Activated T-helper 1 cell treated with anti-CD3 and anti-CD28 coated beads, Interleukin-12 subunit alpha, Interleukin-12 subunit beta, Interleukin-2, Interleukin-4 antibody, amounts not matched to agents 30 ng/mL and 10 ng/mL and 1 ng/mL, durations not matched to agents 14 hours and 24 hours and 36 hours (primary cell): ENCODE measurements at regions of chr1 and their contacts with region 1.

Region 1: DNA sequence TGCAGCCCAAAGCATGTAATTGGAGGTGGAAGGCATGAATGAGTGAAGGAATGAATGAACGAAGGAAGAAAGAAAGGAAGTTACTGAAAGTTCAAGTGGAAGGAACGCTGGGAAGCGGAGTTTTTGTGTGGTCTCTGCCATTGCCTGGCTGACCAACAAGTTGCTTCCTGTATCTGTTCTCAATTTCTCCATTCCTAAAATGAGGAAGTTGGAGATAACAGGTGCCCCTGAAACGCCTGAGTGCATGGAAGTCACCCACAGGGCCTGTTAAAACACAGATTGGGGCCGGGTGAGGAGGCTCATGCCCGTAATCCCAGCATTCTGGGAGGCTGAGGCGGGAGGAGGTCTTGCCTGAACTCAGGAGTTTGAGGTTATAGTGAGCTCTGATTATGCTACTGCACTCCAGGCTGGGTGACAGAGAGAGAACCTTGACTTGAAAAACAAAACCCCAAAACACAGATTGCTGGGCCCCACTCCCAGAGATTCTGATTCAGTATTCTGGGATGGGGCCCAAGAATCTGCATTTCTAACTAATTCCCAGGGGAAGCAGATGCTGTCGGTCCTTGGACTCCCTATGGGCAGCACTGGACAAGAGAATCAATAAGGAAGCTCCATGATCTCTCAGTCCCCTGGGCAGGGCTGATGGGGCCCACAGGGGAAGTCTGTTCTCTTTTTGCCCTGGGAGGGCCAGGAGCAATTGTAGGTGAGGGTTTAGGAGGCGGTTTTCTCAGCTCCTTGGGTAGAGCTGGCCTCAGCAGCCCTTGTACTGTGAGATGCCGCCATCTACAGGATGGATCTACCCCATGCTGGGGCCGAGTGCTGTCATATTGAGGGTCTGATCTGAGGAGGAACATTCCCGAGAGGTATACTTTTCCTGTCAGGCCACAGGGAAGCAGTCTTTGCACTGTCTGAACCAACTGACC is 3.3 kb upstream of the CNR2 start:
- DNase-seq: peak; percentile 36
- H3K4me3 Mint-ChIP-seq: no peak overlapping the region
- H3K27ac Mint-ChIP-seq: peak overlapping the region; percentile 80
- H3K4me1 Mint-ChIP-seq: peaks cover 11% of the 10 kb centered on the region
- H3K27me3 Mint-ChIP-seq: peaks cover 15% of the 10 kb centered on the region

Region 2: DNA sequence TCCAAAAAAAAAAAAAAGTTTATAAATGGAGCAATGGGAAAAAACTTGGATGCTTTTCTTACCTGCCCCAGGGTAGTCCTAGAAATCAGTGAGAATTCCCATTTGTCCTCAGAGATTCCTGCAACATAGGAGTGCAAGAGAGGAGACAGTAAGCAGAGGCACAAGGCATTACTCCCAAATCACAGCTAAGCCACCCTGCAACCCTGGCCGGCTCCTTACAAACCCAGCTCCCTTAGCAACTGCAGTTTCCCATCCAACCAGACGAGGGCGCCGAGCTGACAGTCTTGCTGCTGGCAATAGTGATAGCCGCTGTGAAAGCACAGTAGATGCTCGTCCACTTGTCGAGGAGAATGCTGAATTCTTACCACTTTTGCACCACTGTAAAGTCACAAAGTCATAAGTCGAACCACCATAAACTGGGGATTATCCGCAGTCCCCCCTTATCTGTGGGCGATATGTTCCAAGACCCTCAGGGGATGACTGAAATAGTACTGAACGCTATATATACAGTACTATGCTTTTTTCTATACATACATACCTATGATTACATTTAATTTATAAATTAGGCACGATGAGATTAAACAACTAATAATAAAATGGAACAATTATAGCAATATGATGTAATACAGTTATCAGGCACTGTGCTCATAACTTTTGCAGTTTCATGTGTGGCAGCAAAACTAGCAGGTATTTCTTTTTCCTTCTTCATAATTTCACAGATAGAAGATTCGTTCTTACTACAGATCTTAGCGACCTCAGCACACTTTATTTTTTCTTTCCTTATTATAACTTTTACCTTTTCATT is 144.2 kb before region 1 on chr1:
- intact Hi-C with region 1: loop called (anchors 1 kb)
- DNase-seq: peak; percentile 80
- H3K4me3 Mint-ChIP-seq: no peak overlapping the region
- H3K27ac Mint-ChIP-seq: no peak overlapping the region
- H3K4me1 Mint-ChIP-seq: peaks cover 27% of the 10 kb centered on the region
- H3K27me3 Mint-ChIP-seq: no peaks in the 10 kb centered on the region

Region 3: DNA sequence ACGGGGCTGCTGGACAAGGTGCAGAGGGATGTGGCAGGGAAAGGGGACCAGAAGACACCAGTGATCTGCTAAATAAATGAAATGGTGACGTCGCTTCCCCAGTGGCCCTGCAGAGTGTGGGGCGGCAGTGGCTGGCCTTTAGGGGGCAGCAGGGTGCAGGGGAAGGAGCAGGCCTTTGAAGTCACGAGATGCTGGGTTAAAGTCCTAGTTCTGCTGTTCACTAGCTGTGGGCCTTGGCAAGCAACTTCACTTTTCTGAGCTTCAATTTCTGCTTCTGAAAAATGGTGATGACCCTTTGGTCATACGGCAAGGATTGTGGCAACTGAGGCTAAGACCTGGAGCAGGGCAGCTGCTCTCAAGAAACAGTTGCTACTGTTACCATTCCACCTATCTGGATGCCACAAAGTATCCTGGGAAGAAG is 106.7 kb before region 1 on chr1:
- intact Hi-C with region 1: loop called (anchors 1 kb)
- DNase-seq: peak; percentile 70
- H3K4me3 Mint-ChIP-seq: no peak overlapping the region
- H3K27ac Mint-ChIP-seq: no peak overlapping the region
- H3K4me1 Mint-ChIP-seq: peaks cover 19% of the 10 kb centered on the region
- H3K27me3 Mint-ChIP-seq: no peaks in the 10 kb centered on the region

Region 4: DNA sequence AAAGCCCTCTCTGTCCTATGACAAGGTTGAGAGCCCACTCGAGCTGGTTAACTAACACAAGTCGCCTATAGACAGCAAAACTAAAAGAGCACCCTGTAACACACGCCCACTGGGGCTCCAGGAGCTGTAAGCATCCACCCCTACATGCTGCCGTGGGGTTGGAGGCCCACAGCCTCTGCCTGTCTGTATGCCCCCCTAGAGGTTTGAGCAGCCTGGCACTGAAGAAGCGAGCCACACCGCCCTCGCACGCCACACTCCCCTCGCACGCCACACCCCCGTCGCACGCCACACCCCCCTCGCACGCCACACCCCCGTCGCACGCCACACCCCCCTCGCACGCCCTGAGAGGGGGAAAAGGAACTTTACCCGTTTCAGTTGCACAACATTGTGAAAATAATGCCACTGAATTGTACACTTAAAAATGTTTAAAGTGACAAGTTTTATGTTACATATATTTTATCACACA is 78.0 kb before region 1 on chr1:
- intact Hi-C with region 1: loop called (anchors 1 kb)
- DNase-seq: peak; percentile 53
- H3K4me3 Mint-ChIP-seq: peak overlapping the region; percentile 75
- H3K27ac Mint-ChIP-seq: no peak overlapping the region
- H3K4me1 Mint-ChIP-seq: peaks cover 14% of the 10 kb centered on the region
- H3K27me3 Mint-ChIP-seq: peaks cover 10% of the 10 kb centered on the region

Region 5: GRCh38 chr1:23854568-23854967 is 61.9 kb before region 1 on chr1:
- intact Hi-C with region 1: no loop called
- DNase-seq: no peak
- H3K4me3 Mint-ChIP-seq: no peak overlapping the region
- H3K27ac Mint-ChIP-seq: no peak overlapping the region
- H3K4me1 Mint-ChIP-seq: no peaks in the 10 kb centered on the region
- H3K27me3 Mint-ChIP-seq: peaks cover 2% of the 10 kb centered on the region

Region 6: DNA sequence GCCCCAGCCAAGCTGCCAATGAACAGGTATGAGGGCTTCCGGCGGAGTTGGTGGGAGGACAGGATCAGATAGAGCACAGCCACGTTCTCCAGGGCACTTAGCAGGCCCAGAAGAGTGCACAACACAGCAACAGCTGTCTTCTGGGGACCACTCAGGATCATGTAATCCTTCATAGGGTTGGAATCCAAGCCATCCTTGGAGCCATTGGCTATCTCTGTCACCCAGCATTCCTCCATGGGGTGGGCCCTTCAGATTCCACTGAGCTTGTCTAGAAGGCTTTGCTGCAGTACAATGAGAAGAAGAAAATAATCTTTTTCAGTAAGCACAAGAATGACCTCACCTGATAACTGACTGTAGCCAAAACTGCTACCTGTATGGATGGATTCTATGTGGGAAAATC is 41.1 kb before region 1 on chr1:
- intact Hi-C with region 1: no loop called
- DNase-seq: no peak
- H3K4me3 Mint-ChIP-seq: no peak overlapping the region
- H3K27ac Mint-ChIP-seq: no peak overlapping the region
- H3K4me1 Mint-ChIP-seq: no peaks in the 10 kb centered on the region
- H3K27me3 Mint-ChIP-seq: no peaks in the 10 kb centered on the region

Region 7: DNA sequence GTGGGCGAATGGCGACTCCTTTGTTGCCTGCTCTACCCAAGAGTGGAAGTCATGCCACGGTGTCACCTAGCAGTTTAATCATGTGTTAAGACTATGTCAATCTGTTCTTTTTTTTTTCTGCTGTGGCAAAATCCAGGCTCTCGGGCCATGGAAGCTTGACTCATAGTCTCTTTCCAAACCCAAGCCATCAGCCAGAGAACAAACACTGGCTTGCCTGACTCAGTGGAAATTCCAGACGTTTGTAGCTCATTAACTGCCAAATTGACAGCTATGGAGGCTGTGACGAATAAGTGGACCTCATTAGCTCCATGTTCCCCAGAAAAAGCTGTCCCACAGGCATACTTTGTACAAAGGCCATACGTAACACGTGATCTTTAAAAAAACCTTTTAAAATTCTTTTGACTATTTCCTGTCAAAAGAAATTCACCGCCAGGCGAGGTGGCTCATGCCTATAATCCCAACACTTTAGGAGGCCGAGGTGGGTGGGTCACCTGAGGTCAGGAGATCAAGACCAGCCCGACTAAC is 35.2 kb after region 1 on chr1:
- intact Hi-C with region 1: no loop called
- DNase-seq: no peak
- H3K4me3 Mint-ChIP-seq: no peak overlapping the region
- H3K27ac Mint-ChIP-seq: no peak overlapping the region
- H3K4me1 Mint-ChIP-seq: peaks cover 17% of the 10 kb centered on the region
- H3K27me3 Mint-ChIP-seq: peaks cover 7% of the 10 kb centered on the region